Aorta (tissue), 5 donors: ENCODE measurements at regions of chr4 and their contacts with region 1.

Region 1: DNA sequence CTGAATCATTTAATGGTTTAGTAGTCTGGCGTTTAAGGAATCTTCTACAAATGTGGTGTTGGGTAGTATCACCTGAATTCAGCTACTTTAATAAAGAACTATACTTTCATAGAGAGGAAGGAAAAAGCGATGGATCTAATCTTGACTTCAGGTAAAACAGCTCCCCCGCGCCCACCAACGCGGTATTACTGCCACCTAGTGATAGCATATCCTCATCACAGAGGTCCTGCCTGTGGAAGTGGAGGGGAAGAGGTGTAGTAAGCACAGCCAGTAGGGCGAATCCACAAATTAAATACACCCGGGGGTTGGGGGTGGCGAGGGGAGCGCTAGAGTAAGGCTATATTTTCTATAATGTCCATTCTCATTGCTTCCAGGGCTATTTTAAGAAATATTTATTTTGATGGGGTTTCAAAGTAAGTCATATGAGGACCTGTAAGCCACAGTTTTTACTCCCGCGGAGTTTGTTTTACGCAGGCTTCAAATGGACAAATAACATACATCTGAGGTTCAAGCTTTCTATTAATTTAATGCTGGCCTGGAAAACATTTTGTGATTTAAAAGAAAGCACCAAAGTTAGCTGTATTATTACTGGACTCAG is 8.3 kb upstream of the DAPP1 start:
- DNase-seq: peak in 1 of 2 donors; percentile 55
- ATAC-seq: peak; percentile 78
- H3K4me3 ChIP-seq: no peak overlapping the region
- H3K27ac ChIP-seq: no peak overlapping the region
- H3K4me1 ChIP-seq: no peaks in the 10 kb centered on the region
- H3K27me3 ChIP-seq: no peaks in the 10 kb centered on the region

Region 2: GRCh38 chr4:99729186-99729585 is 79.2 kb before region 1 on chr4:
- intact Hi-C with region 1: loop called in 1 of 2 experiments (anchors 5 kb)
- DNase-seq: no peak
- ATAC-seq: no peak
- H3K4me3 ChIP-seq: no peak overlapping the region
- H3K27ac ChIP-seq: no peak overlapping the region
- H3K4me1 ChIP-seq: no peaks in the 10 kb centered on the region
- H3K27me3 ChIP-seq: no peaks in the 10 kb centered on the region

Region 3: DNA sequence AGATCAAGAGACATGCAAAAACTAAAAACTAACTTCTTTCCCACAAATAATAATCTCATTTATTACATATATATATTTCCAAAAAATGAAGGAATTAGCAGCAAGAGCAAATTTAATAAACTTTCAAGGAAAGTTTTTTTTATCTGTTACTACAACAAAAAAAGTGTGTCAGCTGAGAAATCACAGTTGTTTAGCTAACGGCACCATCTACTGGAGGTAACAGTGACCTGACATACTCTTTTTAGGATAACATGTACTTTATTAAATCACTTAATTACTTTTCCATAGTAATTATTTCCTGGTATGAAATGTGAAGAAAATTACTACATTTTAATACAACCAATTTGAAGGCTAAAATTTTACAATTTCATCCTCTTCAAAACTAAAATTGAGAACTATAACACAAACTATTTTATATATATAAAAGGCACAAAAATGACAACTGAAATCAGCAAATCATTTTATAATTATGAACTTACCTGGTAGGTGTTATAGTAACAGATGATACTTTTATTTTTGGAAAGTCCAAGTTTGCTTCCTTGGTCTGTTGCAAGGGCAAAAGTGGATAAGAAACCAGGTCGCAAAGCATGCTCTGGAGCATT is 76.8 kb after region 1 on chr4:
- intact Hi-C with region 1: loop called in 1 of 2 experiments (anchors 10 kb)
- DNase-seq: no peak
- ATAC-seq: no peak
- H3K4me3 ChIP-seq: no peak overlapping the region
- H3K27ac ChIP-seq: no peak overlapping the region
- H3K4me1 ChIP-seq: no peaks in the 10 kb centered on the region
- H3K27me3 ChIP-seq: no peaks in the 10 kb centered on the region

Region 4: DNA sequence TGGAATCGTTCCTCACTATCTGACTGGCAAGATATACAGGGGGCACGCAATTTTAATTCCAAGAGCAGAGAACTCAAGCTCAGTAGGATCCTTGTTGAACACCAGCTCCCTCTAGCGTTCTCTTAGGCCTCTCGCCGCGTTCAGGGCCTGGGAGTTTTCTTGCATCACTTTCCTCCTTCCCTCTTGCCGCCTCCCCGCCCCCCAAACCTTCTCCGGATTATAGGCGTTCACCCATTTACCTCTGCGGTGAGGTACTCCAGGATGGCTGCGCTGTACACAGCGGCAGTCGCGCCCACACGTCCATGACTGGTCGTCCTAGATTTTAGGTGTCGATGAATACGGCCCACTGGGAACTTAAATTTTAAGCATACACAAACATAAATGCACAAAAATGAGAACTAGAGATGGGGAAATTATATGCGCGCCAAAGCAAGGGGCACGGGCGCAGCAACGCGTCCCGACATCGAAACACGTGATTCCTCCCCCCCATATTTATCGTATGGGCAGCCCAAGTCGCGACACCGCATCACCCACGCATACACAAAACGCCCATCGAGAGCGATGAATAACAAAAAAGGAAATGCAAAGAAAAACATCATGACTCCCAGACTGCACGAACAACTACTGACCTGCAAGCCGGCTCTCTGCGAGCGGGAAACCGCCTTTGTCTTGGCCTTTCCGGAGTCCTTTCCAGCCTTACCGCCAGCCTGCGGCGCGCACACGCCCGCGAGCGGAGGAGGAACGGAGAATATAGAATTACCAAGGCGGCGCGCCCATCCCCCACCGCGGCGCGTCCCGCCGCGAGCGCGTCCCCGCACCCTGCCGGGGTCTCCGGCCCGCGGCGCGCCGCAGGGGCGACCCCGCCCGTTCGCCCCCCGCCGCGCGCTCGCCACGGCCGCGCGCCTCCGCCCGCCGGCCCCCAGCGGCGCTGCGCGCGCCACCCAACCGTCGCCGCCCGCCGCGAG is 141.0 kb after region 1 on chr4:
- intact Hi-C with region 1: loop called in 1 of 2 experiments (anchors 5 kb)
- DNase-seq: peak; percentile 93
- ATAC-seq: peak; percentile 69
- H3K4me3 ChIP-seq: peak overlapping the region; percentile 72 to 90
- H3K27ac ChIP-seq: peak overlapping the region in 1 of 2 donors; percentile 81
- H3K4me1 ChIP-seq: no peaks in the 10 kb centered on the region
- H3K27me3 ChIP-seq: no peaks in the 10 kb centered on the region